ENCODE measurements at regions of chr18 and their contacts with region 1.

Region 1: GRCh38 chr18:2787225-2787624 is 59.6 kb upstream of the EMILIN2 start:
- DNase-seq: no peak
- ATAC-seq: no peak
- H3K4me3 ChIP-seq: no peak overlapping the region
- H3K4me3 Mint-ChIP-seq: no peak overlapping the region
- H3K27ac ChIP-seq: no peak overlapping the region
- H3K27ac Mint-ChIP-seq: peak overlapping the region; percentile 28
- H3K4me1 ChIP-seq: no peaks in the 10 kb centered on the region
- H3K4me1 Mint-ChIP-seq: peaks cover 5% of the 10 kb centered on the region
- H3K27me3 ChIP-seq: no peaks in the 10 kb centered on the region
- H3K27me3 Mint-ChIP-seq: no peaks in the 10 kb centered on the region
- CTCF ChIP-seq: no peak

Region 2: DNA sequence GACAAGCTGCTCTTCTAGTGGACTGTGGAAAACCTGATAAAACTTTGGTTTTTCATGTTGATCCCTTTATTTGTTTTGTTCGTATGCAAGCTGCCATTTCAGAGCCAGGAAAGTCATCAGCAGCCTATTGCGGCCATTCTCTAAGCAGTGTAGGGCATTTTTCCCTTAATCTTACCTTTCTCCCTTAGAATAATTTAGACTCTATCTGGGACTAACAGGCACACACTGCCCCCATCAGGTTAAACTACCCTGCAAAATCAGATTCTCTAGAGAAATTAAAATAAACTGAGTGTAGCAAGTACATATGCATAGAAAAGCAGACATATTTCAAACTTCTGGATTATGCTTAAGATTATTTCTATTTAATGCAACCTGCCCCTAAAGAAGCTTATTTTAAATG is 563.4 kb before region 1 on chr18:
- CTCF ChIA-PET with region 1: no interaction called
- POLR2A ChIA-PET with region 1: no interaction called
- intact Hi-C with region 1: no loop called
- DNase-seq: no peak
- ATAC-seq: no peak
- H3K4me3 ChIP-seq: no peak overlapping the region
- H3K4me3 Mint-ChIP-seq: no peak overlapping the region
- H3K27ac ChIP-seq: no peak overlapping the region
- H3K27ac Mint-ChIP-seq: no peak overlapping the region
- H3K4me1 ChIP-seq: no peaks in the 10 kb centered on the region
- H3K4me1 Mint-ChIP-seq: no peaks in the 10 kb centered on the region
- H3K27me3 ChIP-seq: peaks cover 0 to 5% of the 10 kb centered on the region in 2 experiments
- H3K27me3 Mint-ChIP-seq: peaks cover 20% of the 10 kb centered on the region
- CTCF ChIP-seq: no peak

Region 3: DNA sequence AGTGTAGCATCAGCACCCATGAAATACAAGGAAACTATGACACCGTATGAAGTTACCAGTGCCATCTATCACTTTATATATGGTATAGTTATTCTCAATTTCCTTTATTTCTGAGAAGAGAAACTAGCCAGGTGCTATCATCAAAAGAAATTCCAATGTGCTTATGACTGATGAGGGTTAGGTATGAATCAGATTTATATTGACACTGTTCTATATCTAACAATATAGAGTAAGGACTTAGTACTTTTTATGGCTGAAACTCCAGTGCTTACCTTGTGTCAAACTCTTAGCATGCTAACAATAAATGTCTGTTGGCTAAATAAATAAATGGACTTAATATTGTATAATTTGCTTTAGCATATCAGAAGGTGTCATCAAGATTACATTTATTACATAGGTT is 222.9 kb before region 1 on chr18:
- CTCF ChIA-PET with region 1: no interaction called
- POLR2A ChIA-PET with region 1: no interaction called
- intact Hi-C with region 1: loop called in 1 of 2 experiments (anchors 10 kb)
- DNase-seq: no peak
- ATAC-seq: no peak
- H3K4me3 ChIP-seq: no peak overlapping the region
- H3K4me3 Mint-ChIP-seq: no peak overlapping the region
- H3K27ac ChIP-seq: no peak overlapping the region
- H3K27ac Mint-ChIP-seq: no peak overlapping the region
- H3K4me1 ChIP-seq: peaks cover 2% of the 10 kb centered on the region
- H3K4me1 Mint-ChIP-seq: peaks cover 35% of the 10 kb centered on the region
- H3K27me3 ChIP-seq: no peaks in the 10 kb centered on the region
- H3K27me3 Mint-ChIP-seq: no peaks in the 10 kb centered on the region
- CTCF ChIP-seq: no peak

Region 4: DNA sequence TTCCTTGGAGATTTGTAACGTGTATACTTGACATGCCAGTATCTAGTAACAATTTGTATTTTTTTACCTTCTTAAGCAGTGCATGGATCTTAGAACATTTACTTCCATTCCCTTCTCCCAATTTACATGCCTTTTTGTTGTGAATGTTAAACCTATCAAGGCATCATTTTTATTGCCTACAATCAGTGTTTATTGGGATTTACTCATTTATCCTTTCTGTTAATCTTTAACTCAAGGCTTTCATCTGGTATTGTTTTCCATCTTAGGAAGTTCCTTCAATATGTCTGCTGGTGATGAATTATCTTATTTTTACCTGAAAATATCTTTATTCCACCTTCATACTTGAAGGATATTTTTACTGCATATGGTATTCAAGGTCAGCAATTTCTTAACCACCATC is 28.9 kb before region 1 on chr18:
- CTCF ChIA-PET with region 1: no interaction called
- POLR2A ChIA-PET with region 1: no interaction called
- intact Hi-C with region 1: loop called in 1 of 2 experiments (anchors 5 kb)
- DNase-seq: no peak
- ATAC-seq: no peak
- H3K4me3 ChIP-seq: no peak overlapping the region
- H3K4me3 Mint-ChIP-seq: no peak overlapping the region
- H3K27ac ChIP-seq: no peak overlapping the region
- H3K27ac Mint-ChIP-seq: peak overlapping the region; percentile 34
- H3K4me1 ChIP-seq: no peaks in the 10 kb centered on the region
- H3K4me1 Mint-ChIP-seq: peaks cover 27% of the 10 kb centered on the region
- H3K27me3 ChIP-seq: no peaks in the 10 kb centered on the region
- H3K27me3 Mint-ChIP-seq: no peaks in the 10 kb centered on the region
- CTCF ChIP-seq: no peak

Region 5: GRCh38 chr18:2846636-2847364 is 59.6 kb after region 1 on chr18 and contains the start of gene EMILIN2:
- CTCF ChIA-PET with region 1: no interaction called
- POLR2A ChIA-PET with region 1: no interaction called
- intact Hi-C with region 1: no loop called
- DNase-seq: peak in 13 of 14 experiments; percentile 19 to 76 (median 32)
- ATAC-seq: peak; percentile 48
- H3K4me3 ChIP-seq: peak within 1 kb of the TSS; percentile 55
- H3K4me3 Mint-ChIP-seq: peak within 1 kb of the TSS; percentile 91
- H3K27ac ChIP-seq: no peak within 1 kb of the TSS
- H3K27ac Mint-ChIP-seq: no peak within 1 kb of the TSS
- H3K4me1 ChIP-seq: peaks cover 23% of the 10 kb centered on the region
- H3K4me1 Mint-ChIP-seq: peaks cover 19% of the 10 kb centered on the region
- H3K27me3 ChIP-seq: peaks cover 39 to 43% of the 10 kb centered on the region in 2 experiments
- H3K27me3 Mint-ChIP-seq: peaks cover 78% of the 10 kb centered on the region
- CTCF ChIP-seq: no peak
- total RNA-seq, gene EMILIN2: 3.2 to 3.3 TPM